Mammary epithelial cell (primary cell): ENCODE measurements at regions of chr12 and their contacts with region 1.

Region 1: GRCh38 chr12:52058631-52059361 is 7.6 kb downstream of the NR4A1 start:
- DNase-seq: no peak
- H3K4me3 ChIP-seq: no peak overlapping the region
- H3K27ac ChIP-seq: no peak overlapping the region
- H3K4me1 ChIP-seq: no peaks in the 10 kb centered on the region
- H3K27me3 ChIP-seq: no peaks in the 10 kb centered on the region
- CTCF ChIP-seq: no peak

Region 2: DNA sequence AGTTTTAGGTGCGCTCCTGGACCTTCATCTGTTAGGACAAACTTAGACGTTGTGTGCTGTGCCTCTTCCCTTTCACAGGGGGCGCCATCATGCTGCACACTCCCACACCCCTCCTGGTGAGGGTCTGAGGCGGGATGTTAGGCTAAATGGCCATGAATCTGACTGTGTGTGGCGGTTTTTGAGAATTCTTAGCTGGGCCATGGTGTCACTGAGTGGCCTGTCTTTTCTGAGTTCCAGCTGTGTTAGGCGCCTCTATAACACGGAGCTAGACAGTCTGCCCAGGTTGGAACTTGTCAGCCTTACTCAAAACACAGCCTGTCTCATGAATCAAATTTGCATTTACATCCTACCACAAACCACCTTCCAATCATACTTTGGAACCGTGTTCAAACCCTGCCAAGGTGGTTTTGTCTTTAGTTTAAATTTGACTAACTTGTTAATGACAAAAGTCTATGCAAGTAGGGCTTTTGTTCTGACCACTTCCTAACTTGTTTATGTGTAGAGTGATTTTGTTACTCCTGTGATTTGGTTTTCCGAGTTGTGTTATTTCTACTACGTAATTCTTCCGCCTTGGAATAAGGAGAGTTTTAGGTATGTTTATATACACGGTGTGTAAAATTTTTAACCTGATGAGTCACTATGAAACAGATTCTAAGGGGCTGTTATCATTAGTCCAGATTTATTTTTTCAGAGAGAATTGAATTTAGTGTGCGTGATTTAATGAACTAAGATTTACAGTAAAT is 87.7 kb before region 1 on chr12:
- CTCF ChIA-PET with region 1: no interaction called
- dilution Hi-C with region 1: no loop called
- in situ Hi-C with region 1: no loop called
- intact Hi-C with region 1: no loop called
- DNase-seq: peak; percentile 87
- H3K4me3 ChIP-seq: peak overlapping the region in 2 of 3 experiments; percentile 26 to 29
- H3K27ac ChIP-seq: peak overlapping the region; percentile 64
- H3K4me1 ChIP-seq: peaks cover 43% of the 10 kb centered on the region
- H3K27me3 ChIP-seq: no peaks in the 10 kb centered on the region
- CTCF ChIP-seq: peak; percentile 52 to 75

Region 3: DNA sequence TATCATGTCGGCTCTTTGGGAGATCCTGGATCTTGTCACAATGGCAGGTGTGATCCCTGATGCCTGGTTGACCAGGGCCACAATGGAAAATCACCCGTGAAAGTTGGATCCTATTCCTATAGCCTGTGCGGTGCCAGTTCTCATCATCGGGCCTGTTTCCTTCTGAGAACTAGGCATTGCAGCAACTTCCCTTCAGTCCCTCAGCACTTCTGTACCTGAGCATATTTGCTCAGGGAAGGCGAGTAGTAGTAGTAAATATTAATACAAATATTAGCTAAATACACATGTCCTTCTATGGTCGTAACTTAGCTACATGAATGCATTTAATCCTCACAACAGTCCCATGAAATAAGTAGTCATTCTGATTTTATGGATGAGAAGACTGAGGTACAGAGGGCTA is 74.1 kb before region 1 on chr12:
- CTCF ChIA-PET with region 1: no interaction called
- dilution Hi-C with region 1: no loop called
- in situ Hi-C with region 1: no loop called
- intact Hi-C with region 1: no loop called
- DNase-seq: no peak
- H3K4me3 ChIP-seq: no peak overlapping the region
- H3K27ac ChIP-seq: no peak overlapping the region
- H3K4me1 ChIP-seq: no peaks in the 10 kb centered on the region
- H3K27me3 ChIP-seq: no peaks in the 10 kb centered on the region
- CTCF ChIP-seq: no peak

Region 4: DNA sequence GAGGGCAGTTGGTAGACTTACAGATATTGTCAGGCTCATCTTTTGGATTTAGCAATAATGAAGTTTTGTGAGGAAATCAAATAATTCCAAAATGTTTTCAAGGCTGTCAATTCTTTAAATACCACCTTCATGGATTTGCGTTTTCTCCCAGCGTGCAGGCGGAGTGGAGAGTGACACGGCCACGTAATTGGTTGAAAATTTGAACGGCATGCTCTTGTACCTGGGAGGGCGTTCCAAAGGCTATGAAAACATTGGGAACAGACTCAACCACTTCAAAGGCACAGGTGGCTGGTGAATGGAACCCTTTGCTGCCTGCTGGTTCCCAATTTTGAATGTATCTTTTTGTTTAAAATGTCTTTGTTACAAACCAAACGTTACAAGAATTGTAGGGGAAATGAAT is 33.1 kb after region 1 on chr12:
- CTCF ChIA-PET with region 1: no interaction called
- dilution Hi-C with region 1: loop called (anchors 5 kb)
- in situ Hi-C with region 1: no loop called
- intact Hi-C with region 1: no loop called
- DNase-seq: no peak
- H3K4me3 ChIP-seq: no peak overlapping the region
- H3K27ac ChIP-seq: no peak overlapping the region
- H3K4me1 ChIP-seq: no peaks in the 10 kb centered on the region
- H3K27me3 ChIP-seq: peaks cover 4% of the 10 kb centered on the region
- CTCF ChIP-seq: no peak